Activated T-helper 1 cell treated with anti-CD3 and anti-CD28 coated beads, Interleukin-12 subunit alpha, Interleukin-12 subunit beta, Interleukin-2, Interleukin-4 antibody, amounts not matched to agents 30 ng/mL and 10 ng/mL and 1 ng/mL, durations not matched to agents 14 hours and 24 hours and 36 hours (primary cell): ENCODE measurements at regions of chr12 and their contacts with region 1.

Region 1: DNA sequence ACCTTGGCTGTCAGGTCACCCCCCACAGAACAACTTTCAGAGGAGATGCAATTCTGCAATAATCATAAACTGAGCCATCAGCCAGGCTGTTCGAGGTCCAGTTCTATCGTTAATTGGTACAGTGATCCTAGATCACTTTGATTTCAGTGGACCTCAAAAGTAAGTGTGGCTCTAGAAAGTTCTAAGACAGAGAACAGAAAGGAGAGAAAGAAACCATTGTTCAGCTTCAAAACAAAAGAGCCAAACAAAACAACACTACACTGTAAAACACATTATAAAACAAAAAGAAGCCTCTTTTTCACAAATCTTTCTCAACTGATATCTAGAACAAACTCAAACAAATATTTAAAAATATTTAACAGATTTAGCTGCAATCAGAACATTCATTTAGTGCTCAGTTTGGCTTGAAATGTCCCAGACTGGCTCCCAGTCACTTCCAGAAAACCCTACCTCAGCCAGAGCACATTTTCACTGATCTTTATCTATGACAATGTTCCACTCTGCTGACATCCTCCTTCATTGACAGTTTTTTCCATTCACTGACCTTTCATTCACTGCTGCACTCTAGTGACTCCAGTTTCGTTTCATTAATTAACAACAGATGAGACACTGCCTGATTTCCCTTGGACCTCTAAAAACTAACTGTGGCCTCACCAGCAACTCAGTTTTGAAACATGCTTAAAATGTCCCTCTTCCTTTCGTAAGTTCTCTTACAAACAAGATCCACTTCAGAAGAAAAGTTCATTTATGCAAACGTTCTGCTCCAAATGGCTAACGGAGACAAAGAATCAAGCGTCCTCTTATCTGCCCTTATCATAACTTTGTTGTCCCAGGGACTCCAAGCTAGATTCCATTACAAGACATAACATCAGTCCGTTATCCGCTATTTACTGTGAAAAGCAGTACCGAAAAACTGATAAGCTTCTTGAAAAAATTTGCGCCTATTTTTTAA is 56.8 kb downstream of the DUSP16 start:
- DNase-seq: peak; percentile 17
- H3K4me3 Mint-ChIP-seq: peak overlapping the region; percentile 63
- H3K27ac Mint-ChIP-seq: peak overlapping the region; percentile 93
- H3K4me1 Mint-ChIP-seq: peaks cover 53% of the 10 kb centered on the region
- H3K27me3 Mint-ChIP-seq: no peaks in the 10 kb centered on the region

Region 2: DNA sequence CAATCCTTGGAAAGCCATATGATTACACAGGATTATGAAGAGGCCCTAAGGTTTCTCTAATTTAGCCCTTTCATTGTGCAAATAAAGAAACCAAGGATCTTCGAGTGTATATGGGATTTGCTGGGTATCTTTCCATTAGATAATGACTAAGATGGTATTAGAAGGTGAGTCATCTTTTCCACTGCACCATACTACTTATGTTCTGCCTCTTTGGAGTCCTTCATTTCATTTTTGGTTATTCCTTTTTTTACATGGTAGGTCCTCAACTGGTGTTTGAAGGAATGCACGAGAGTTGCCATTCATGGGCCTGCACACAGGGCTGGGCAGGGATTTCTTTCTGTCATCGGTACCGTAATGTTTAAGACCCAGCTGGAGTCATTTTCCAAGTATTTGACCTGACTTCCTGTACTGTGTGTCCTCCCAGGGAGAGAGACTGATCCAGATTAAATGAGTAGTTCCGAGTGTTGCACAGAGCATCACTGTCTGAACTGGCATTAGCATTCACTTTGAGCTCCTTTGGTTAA is 63.2 kb before region 1 on chr12:
- intact Hi-C with region 1: loop called (anchors 1 kb)
- DNase-seq: no peak
- H3K4me3 Mint-ChIP-seq: peak overlapping the region; percentile 34
- H3K27ac Mint-ChIP-seq: peak overlapping the region; percentile 95
- H3K4me1 Mint-ChIP-seq: peaks cover 74% of the 10 kb centered on the region
- H3K27me3 Mint-ChIP-seq: no peaks in the 10 kb centered on the region

Region 3: GRCh38 chr12:12461923-12462315 is 43.9 kb before region 1 on chr12:
- intact Hi-C with region 1: loop called (anchors 1 kb)
- DNase-seq: no peak
- H3K4me3 Mint-ChIP-seq: peak overlapping the region; percentile 75
- H3K27ac Mint-ChIP-seq: peak overlapping the region; percentile 95
- H3K4me1 Mint-ChIP-seq: peaks cover 69% of the 10 kb centered on the region
- H3K27me3 Mint-ChIP-seq: no peaks in the 10 kb centered on the region

Region 4: DNA sequence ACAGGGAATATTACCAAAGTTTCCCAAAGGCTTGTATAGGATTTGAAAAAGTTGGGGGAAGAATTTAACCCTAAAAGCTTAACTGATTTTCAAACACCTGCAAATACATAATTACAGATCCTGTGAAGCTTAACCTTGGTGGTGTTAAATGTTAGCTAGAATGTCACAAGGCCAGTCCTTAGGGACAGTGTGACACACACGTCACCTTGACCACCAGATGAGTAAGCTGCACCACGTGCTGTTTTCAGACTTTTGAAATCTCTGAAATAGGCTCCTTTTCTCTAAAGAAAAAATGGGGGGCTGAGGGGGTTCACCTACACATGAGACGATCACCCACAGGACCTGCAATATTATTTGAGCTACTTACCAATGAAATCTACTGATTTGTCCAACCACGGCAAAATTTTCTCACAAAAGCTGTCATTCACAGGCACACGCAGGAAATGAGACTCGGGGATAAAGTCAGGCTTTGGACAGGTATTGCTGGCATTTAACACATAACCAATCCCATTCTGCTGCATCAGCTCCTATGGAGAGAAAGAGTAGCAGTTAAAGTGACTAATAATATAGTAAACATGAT is 19.1 kb before region 1 on chr12:
- intact Hi-C with region 1: loop called (anchors 1 kb)
- DNase-seq: no peak
- H3K4me3 Mint-ChIP-seq: no peak overlapping the region
- H3K27ac Mint-ChIP-seq: peak overlapping the region; percentile 59
- H3K4me1 Mint-ChIP-seq: peaks cover 55% of the 10 kb centered on the region
- H3K27me3 Mint-ChIP-seq: no peaks in the 10 kb centered on the region

Region 5: GRCh38 chr12:12611512-12612306 is 105.9 kb after region 1 on chr12 and contains the start of gene CREBL2:
- intact Hi-C with region 1: loop called (anchors 1 kb)
- DNase-seq: peak; percentile 78
- H3K4me3 Mint-ChIP-seq: peak within 1 kb of the TSS; percentile 95
- H3K27ac Mint-ChIP-seq: peak within 1 kb of the TSS; percentile 96
- H3K4me1 Mint-ChIP-seq: peaks cover 47% of the 10 kb centered on the region
- H3K27me3 Mint-ChIP-seq: no peaks in the 10 kb centered on the region
- total RNA-seq, gene CREBL2: 16.7 and 17.9 TPM in 2 replicates